Right ventricle myocardium inferior (tissue), 1 donor: ENCODE measurements at regions of chr18 and their contacts with region 1.

Region 1: DNA sequence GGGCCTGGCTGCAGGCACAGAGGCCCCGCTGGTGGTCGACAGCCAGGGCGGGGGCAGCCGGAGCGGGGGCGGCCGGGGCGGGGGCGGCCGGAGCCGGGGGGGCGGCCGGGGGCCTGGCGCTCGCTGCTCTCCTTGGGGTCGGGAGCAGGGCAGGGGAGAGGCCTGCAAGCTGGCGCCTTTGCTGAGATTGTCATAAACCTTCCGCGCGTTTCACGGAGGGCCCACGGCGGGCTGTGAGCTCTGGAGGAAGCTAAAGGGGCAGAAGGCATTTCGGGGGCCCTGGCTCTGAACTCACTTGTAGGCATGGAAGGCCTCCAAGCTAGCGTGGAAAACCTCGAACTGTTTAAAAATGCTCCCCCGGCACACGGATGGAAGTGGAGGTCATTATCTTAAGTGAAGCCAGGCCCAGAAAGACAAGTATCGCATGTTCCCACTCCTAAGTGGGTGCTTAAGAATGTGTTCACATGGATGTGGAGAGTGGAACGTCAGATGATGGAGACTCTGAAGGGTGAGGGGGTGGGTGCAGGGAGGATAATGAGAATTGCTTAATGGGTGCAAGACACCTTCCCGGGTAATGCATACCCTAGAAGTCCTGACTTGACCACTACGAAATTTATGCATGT is 629 bp downstream of the PRELID3A start:
- DNase-seq: no peak
- ATAC-seq: peak; percentile 24

Region 2: DNA sequence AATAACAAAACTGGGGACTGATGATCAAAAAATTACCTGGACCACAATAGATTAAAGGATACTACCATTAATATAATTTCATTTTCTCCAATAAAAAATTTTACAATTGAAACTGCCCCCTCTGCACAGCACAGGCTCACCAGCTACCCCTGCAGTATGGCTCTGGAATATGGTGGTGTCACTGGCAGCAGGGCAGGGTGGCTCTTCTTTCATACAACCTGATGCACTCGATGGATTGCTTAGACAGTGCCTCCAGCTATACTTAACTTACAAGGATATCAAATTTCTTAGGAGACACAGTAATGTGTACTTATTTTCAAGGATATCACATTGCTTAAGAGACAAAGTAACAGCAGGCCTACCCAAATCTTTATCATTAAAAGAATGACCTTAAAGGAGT is 123.4 kb after region 1 on chr18:
- intact Hi-C with region 1: loop called (anchors 10 kb)
- DNase-seq: no peak
- ATAC-seq: no peak

Region 3: GRCh38 chr18:12744103-12744502 is 335.7 kb after region 1 on chr18:
- intact Hi-C with region 1: no loop called
- DNase-seq: no peak
- ATAC-seq: no peak